Activated naive CD8-positive, alpha-beta T cell treated with anti-CD3 and anti-CD28 coated beads, Interleukin-2, amount 10 ng/mL, durations not matched to agents 7 days and 5 days (primary cell): ENCODE measurements at regions of chr17 and their contacts with region 1.

Region 1: GRCh38 chr17:39153599-39154051 is 2.2 kb upstream of the PLXDC1 start:
- DNase-seq: peak; percentile 95
- ATAC-seq: peak; percentile 47
- H3K4me3 Mint-ChIP-seq: peak overlapping the region; percentile 98
- H3K27ac Mint-ChIP-seq: peak overlapping the region; percentile 94
- H3K4me1 Mint-ChIP-seq: peaks cover 32% of the 10 kb centered on the region
- H3K27me3 Mint-ChIP-seq: peaks cover 16% of the 10 kb centered on the region

Region 2: GRCh38 chr17:38982858-38983746 is 170.5 kb before region 1 on chr17:
- POLR2A ChIA-PET with region 1: interaction called, 25 read pairs
- DNase-seq: no peak
- ATAC-seq: peak; percentile 60
- H3K4me3 Mint-ChIP-seq: no peak overlapping the region
- H3K27ac Mint-ChIP-seq: no peak overlapping the region
- H3K4me1 Mint-ChIP-seq: peaks cover 6% of the 10 kb centered on the region
- H3K27me3 Mint-ChIP-seq: peaks cover 5% of the 10 kb centered on the region

Region 3: GRCh38 chr17:39057701-39058206 is 95.9 kb before region 1 on chr17:
- POLR2A ChIA-PET with region 1: interaction called, 12 read pairs
- DNase-seq: no peak
- ATAC-seq: no peak
- H3K4me3 Mint-ChIP-seq: peak overlapping the region; percentile 85
- H3K27ac Mint-ChIP-seq: peak overlapping the region; percentile 87
- H3K4me1 Mint-ChIP-seq: peaks cover 5% of the 10 kb centered on the region
- H3K27me3 Mint-ChIP-seq: peaks cover 14% of the 10 kb centered on the region

Region 4: GRCh38 chr17:39094607-39095308 is 58.9 kb before region 1 on chr17:
- POLR2A ChIA-PET with region 1: interaction called, 34 read pairs
- DNase-seq: peak; percentile 56
- ATAC-seq: peak; percentile 35
- H3K4me3 Mint-ChIP-seq: peak overlapping the region; percentile 80
- H3K27ac Mint-ChIP-seq: peak overlapping the region; percentile 90
- H3K4me1 Mint-ChIP-seq: peaks cover 64% of the 10 kb centered on the region
- H3K27me3 Mint-ChIP-seq: no peaks in the 10 kb centered on the region

Region 5: GRCh38 chr17:39164675-39165143 is 11.1 kb after region 1 on chr17:
- POLR2A ChIA-PET with region 1: interaction called, 26 read pairs
- DNase-seq: peak; percentile 80
- ATAC-seq: peak; percentile 95
- H3K4me3 Mint-ChIP-seq: peak overlapping the region; percentile 89
- H3K27ac Mint-ChIP-seq: peak overlapping the region; percentile 52
- H3K4me1 Mint-ChIP-seq: peaks cover 28% of the 10 kb centered on the region
- H3K27me3 Mint-ChIP-seq: peaks cover 28% of the 10 kb centered on the region

Region 6: GRCh38 chr17:39199820-39200069 is 46.1 kb after region 1 on chr17:
- POLR2A ChIA-PET with region 1: interaction called, 11 read pairs
- DNase-seq: peak; percentile 80
- ATAC-seq: peak; percentile 64
- H3K4me3 Mint-ChIP-seq: peak overlapping the region; percentile 95
- H3K27ac Mint-ChIP-seq: peak overlapping the region; percentile 97
- H3K4me1 Mint-ChIP-seq: peaks cover 54% of the 10 kb centered on the region
- H3K27me3 Mint-ChIP-seq: no peaks in the 10 kb centered on the region